ENCODE measurements at regions of chr12 and their contacts with region 1.

Region 1: GRCh38 chr12:117587631-117588287 is 226.3 kb upstream of the NOS1 start:
- DNase-seq: peak; percentile 76
- ATAC-seq: peak; percentile 90
- H3K4me3 ChIP-seq: no peak overlapping the region
- H3K27ac ChIP-seq: no peak overlapping the region
- H3K4me1 ChIP-seq: no peaks in the 10 kb centered on the region
- H3K27me3 ChIP-seq: no peaks in the 10 kb centered on the region
- CTCF ChIP-seq: peak; percentile 92

Region 2: DNA sequence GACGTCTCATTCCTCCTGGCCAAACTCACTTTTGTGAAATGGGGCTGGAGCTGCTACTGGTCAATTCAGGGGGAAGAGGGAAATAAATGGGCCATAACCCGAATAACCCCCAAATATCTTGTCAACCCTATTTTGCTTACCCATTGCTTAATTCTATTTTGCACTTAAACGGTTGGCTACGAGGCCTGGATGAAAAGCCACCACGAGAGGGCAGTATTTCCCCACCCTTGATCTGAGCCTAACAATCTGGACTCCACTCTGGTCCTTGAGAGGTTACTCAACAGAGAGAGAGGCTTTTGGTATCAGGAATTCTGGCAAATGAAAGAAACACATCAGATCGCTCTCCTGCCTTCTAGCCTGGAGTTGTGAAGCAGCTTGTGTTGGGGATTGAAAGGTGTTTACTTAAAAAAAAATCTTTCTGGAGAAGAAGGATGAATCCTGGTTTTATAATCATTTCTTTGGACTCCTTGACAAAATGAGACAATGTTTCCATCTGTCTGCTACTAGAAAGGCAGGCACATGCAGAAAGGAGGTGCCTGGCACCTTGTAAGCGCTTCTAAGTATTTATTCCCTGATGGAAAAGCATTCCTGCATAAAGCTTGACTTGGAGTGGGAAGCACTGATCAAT is 375.1 kb before region 1 on chr12:
- CTCF ChIA-PET with region 1: no interaction called
- POLR2A ChIA-PET with region 1: no interaction called
- intact Hi-C with region 1: loop called (anchors 1 kb)
- DNase-seq: peak; percentile 91
- ATAC-seq: peak; percentile 92
- H3K4me3 ChIP-seq: no peak overlapping the region
- H3K27ac ChIP-seq: no peak overlapping the region
- H3K4me1 ChIP-seq: peaks cover 8% of the 10 kb centered on the region
- H3K27me3 ChIP-seq: peaks cover 25% of the 10 kb centered on the region
- CTCF ChIP-seq: peak; percentile 99

Region 3: DNA sequence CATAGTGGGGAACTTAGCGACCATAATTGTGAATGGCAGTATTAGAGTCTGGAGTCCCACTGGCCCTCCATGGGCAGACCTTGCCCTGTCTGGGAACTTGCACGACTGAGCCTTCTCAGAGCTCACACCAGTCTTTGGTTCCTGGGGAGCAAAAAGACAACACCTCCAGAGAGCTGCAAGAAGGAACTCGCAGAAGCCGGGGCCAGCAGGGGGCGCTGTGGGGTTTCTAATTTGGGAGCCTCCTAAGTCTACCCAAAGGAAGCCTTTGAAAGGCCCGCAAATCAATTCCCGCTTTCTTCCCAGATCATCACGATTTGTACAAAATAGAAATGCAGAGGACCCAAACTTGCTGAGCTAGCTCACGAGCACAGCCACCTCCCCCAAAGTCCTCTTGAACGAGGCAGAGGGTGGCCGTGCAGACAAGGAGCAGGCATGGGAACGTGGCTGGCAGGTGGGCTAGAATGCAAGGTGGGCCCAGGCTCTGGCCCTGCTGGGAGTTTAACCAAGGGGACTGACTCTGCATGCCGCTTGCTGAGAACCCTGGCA is 351.2 kb before region 1 on chr12:
- CTCF ChIA-PET with region 1: no interaction called
- POLR2A ChIA-PET with region 1: no interaction called
- intact Hi-C with region 1: loop called (anchors 1 kb)
- DNase-seq: peak; percentile 89
- ATAC-seq: peak; percentile 97
- H3K4me3 ChIP-seq: no peak overlapping the region
- H3K27ac ChIP-seq: no peak overlapping the region
- H3K4me1 ChIP-seq: no peaks in the 10 kb centered on the region
- H3K27me3 ChIP-seq: peaks cover 15% of the 10 kb centered on the region; the same call in 1 of the 2 replicates
- CTCF ChIP-seq: peak; percentile 97

Region 4: GRCh38 chr12:117486840-117487659 is 100.7 kb before region 1 on chr12:
- CTCF ChIA-PET with region 1: no interaction called
- POLR2A ChIA-PET with region 1: no interaction called
- intact Hi-C with region 1: loop called (anchors 1 kb)
- DNase-seq: peak; percentile 97
- ATAC-seq: peak; percentile 94
- H3K4me3 ChIP-seq: no peak overlapping the region; the same call in 1 of the 2 replicates
- H3K27ac ChIP-seq: peak overlapping the region; percentile 78
- H3K4me1 ChIP-seq: peaks cover 26% of the 10 kb centered on the region
- H3K27me3 ChIP-seq: no peaks in the 10 kb centered on the region
- CTCF ChIP-seq: no peak

Region 5: DNA sequence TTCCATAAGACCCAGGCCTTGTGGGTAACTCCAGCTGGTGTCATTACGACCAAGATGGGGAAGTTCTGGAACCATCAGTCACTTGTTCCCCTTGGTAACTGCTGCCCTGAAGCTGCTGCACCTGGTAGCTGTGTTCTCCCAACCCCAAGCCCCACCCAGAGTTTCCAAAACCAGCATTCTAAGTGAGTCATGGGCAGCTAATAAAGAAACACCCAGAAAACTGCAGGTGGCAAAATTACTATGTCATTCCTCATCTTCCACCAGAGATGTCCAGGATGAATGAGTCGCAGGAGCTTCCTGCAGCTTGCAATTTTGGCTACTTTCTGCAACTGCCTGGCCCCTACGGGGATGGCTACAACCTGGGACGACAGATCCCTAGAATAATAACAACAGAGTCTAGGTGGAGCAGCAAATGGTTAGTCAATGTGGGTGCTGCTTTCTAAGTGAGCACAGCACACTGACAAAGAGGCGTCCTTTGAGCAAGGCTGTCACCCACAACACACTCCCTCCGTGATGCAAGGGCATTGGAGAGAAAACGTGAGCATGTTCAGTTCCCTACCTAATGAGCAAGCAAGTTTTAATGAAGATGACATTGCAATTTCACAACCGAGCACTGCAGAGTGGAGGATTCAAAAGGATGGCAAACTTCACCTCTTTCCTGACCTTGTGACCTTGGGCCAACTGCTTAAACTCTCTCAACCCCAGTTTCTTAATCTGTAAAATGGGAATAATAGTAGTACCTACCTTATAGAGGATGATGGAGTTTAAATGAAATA is 75.0 kb after region 1 on chr12:
- CTCF ChIA-PET with region 1: no interaction called
- POLR2A ChIA-PET with region 1: no interaction called
- intact Hi-C with region 1: no loop called
- DNase-seq: peak; percentile 89
- ATAC-seq: peak; percentile 87
- H3K4me3 ChIP-seq: no peak overlapping the region
- H3K27ac ChIP-seq: peak overlapping the region; percentile 22
- H3K4me1 ChIP-seq: peaks cover 17% of the 10 kb centered on the region
- H3K27me3 ChIP-seq: no peaks in the 10 kb centered on the region
- CTCF ChIP-seq: no peak

Region 6: GRCh38 chr12:117830471-117830870 is 242.7 kb after region 1 on chr12:
- CTCF ChIA-PET with region 1: no interaction called
- POLR2A ChIA-PET with region 1: no interaction called
- intact Hi-C with region 1: no loop called
- DNase-seq: no peak
- ATAC-seq: no peak
- H3K4me3 ChIP-seq: no peak overlapping the region
- H3K27ac ChIP-seq: no peak overlapping the region
- H3K4me1 ChIP-seq: peaks cover 20% of the 10 kb centered on the region
- H3K27me3 ChIP-seq: no peaks in the 10 kb centered on the region
- CTCF ChIP-seq: no peak

Measured in PC-3 (cell line).